Sciatic nerve (tissue), 2 donors: ENCODE measurements at regions of chr21 and their contacts with region 1.

Region 1: GRCh38 chr21:42818328-42818749 is 61.0 kb downstream of the WDR4 start:
- DNase-seq: peak; percentile 79
- ATAC-seq: peak; percentile 83

Region 2: DNA sequence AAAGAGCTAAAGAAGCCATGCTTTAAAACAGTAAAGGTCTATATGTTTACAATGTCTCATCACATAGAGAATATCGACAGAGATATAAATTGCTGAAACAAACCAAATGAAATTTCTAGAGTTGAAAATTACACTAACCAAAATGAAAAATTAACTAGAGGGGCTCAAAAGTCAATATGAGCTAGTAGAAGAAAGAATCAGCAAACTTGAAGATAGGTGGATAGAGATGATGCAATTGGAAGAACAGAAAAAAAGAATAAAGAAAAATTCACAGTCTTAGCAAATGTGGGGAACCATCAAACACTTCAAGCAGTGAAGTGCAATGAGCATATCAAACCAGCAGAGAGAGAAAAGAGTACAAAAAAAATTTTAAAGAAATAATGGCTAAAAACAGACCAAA is 1947.2 kb before region 1 on chr21:
- intact Hi-C with region 1: loop called (anchors 10 kb)
- DNase-seq: no peak
- ATAC-seq: no peak

Region 3: DNA sequence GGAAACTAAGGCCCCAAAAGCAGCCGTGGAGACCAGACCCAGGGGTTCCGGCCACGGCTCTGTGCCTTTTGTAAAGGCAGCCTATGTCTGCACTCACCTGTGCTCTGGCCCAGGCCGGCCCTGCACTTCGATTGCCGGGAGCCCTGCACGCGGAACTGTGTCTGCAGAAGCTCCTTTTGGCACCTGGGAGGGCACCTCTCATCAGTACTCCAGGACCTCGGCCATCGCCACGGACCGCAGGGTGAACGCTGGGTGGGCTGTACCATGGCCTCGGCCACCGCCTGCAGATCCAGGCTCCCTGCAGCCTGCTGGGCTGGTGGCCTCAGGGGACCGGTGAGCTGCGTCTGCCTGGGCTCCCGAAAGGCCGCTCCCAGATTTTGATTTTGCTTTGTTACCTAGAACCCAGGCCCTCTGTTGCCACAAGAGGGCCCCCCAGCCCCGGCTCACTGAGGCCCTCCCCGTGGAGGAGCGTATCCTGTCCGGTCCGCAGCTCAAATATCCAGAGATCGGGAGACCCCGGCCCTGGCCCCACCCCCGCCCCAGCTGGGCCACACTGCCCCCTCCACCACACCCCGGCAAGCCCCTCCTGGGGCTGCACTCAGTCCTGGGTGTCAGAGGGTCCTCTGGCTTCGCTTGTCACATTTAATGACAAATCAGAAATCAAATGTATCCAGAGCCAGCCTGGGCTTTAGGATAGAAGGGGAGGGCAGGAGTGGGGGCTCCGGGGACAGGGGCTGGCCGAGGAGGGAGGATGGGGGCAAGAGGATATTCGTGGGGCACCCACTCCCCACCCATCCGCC is 225.1 kb before region 1 on chr21:
- intact Hi-C with region 1: loop called (anchors 5 kb)
- DNase-seq: peak; percentile 83
- ATAC-seq: peak; percentile 95

Region 4: DNA sequence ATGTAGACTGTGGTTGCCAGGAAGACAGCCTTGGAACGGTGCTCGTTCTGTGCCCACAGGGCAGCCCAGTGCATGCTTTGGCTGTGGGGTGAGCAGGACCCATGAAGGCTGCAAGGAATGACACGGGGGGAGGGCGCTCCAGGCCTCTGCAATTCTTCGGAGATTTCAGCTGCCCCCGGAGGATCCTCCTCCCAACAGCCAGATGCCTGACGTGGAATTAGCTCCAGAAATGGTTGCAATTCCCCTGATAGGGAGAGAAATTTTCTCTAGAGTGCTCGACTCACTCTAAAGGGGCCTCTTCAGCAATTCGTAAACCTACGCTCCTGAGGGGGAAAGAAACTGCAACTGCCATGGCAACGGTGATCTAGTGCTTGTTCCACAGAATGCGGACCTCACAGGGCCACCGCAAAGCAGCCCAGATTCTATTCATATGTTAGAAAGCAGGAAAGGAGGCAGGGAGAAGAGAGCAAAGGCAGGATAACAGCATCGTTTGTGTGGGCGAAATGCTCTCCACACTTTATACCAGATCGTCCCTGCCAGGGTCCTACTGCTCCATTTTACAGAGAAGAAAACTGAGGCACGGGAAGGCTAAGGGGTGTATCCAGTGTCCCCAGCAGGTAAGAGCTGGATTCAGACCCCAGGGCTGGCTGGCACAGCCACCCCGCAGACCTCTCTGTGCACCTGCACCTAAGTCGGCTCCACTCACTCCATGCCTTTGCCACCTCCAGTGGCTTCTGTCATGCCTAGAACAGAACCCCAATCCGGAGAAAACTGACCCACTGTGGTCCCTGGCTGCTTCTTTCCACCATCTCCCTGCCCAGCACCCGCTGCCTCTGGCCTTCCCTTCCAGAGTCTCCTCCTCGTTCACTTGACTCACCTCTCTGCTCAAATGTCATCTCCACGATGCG is 176.8 kb before region 1 on chr21:
- intact Hi-C with region 1: loop called (anchors 10 kb)
- DNase-seq: no peak
- ATAC-seq: peak; percentile 48

Region 5: GRCh38 chr21:42655796-42656770 is 162.3 kb before region 1 on chr21:
- intact Hi-C with region 1: no loop called
- DNase-seq: no peak
- ATAC-seq: no peak

Region 6: DNA sequence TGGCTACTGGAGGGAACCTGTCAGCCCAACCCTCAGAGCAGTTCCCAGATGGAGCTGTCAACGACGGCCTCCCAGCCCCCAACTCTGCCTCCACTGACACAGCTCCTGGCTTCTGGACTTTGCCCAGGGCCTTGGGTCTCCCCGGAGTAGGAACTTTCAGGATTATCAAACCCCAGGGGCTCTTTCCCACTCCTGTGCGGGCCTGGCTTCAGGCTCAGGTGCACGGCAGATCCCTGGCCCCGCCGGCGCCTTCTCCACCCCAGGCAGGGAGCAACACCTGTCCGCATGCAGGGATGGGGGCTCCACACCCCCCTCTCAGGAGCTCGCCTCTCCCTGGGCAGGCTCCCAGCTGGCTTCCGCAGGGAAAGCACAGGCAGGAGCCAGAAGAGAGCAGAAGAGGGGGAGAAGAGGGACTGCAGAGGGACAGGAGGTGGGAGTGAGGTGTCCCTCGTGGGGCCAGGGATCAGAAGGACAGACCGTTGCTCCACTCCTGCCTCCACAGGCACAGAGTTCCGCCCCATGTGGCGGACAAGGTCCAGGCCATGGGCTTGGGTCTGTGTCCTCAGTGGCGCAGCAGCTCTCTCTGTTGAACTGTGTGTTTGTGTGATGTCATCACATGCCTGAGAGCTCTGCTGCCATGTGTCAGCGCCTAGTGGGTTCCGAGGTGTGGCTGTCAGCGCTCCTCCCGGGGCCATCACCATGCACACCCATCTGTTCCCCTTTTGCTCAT is 57.2 kb before region 1 on chr21:
- intact Hi-C with region 1: loop called (anchors 10 kb)
- DNase-seq: no peak
- ATAC-seq: no peak

Region 7: DNA sequence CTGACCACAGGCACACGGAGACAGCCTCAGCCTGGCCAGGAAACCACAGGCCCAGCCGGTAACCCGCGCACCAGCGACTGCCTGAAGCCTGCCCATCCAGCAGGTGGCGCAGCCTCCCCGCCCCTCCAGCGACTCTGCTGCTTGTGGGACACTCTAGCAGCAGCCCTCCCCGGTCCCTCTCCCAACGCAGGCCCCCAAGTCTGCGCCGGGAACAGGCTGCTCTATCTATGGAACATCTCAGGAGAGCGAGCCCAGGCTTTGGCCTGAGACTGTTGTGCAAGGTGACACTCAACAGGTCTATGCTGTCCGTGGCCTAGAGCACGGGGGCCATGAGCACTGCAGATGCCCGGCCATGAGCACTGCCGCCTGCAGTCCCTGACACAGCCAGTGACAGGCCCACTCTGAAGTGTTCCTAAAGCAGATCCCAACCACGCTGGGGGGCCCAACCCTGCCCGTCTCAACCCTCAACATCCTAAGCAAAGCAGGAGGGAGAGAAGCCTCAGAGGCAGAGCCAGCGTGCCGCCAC is 32.6 kb after region 1 on chr21:
- intact Hi-C with region 1: no loop called
- DNase-seq: no peak
- ATAC-seq: peak; percentile 18